ENCODE measurements at regions of chr4 and their contacts with region 1.

Region 1: DNA sequence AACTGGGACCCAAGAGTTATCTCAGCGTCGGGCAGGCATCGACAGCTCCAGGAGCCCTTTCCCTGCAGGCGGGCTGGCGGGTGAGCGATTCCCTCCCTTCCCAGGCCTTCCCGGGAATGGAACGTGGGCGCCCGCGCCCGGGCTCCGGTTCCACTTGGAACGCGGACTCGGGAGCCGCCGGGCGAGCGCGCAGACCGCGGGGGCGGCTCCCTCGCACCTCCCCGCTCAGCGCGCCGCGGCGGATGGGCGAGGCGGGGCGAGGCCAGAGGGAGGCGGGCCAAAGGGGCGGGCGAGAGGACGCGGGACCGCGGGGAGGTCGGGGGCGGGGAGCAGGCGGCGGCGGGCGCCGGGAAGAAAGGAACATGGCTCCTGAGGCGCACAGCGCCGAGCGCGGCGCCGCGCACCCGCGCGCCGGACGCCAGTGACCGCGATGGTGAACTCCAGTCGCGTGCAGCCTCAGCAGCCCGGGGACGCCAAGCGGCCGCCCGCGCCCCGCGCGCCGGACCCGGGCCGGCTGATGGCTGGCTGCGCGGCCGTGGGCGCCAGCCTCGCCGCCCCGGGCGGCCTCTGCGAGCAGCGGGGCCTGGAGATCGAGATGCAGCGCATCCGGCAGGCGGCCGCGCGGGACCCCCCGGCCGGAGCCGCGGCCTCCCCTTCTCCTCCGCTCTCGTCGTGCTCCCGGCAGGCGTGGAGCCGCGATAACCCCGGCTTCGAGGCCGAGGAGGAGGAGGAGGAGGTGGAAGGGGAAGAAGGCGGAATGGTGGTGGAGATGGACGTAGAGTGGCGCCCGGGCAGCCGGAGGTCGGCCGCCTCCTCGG is at the start of gene PKD2:
- DNase-seq: peak in 1 of 2 donors; percentile 93
- H3K4me3 ChIP-seq: peak within 1 kb of the TSS; percentile 90 to 96
- H3K27ac ChIP-seq: peak within 1 kb of the TSS; percentile 94 to 98
- H3K4me1 ChIP-seq: peaks cover 0 to 35% of the 10 kb centered on the region in 2 donors
- H3K27me3 ChIP-seq: no peaks in the 10 kb centered on the region
- CTCF ChIP-seq: peak in 1 of 3 experiments; percentile 24
- total RNA-seq, gene PKD2: 119 TPM

Region 2: DNA sequence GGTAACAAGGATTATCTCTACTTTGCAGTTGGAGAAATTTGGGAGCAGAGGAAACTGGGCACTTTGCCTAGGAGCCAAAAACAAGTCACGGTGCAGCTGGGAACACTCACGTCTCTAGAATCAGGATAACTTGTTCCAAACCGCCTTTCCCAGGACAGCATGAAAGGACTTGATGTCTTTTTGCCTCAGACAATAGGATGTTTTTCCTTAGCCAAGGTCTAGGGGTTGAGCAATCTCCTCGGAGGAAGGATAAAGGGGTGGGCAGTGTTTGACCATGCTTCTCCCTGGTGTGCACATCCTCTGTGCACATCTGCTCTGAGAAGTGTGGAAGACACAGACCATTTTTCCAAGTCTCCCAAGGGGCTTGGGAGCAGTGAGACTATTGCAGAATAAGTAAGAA is 476.6 kb before region 1 on chr4:
- intact Hi-C with region 1: loop called (anchors 1 kb)
- DNase-seq: peak in 1 of 2 donors; percentile 89
- H3K4me3 ChIP-seq: peak overlapping the region; percentile 46 to 71
- H3K27ac ChIP-seq: peak overlapping the region; percentile 91 to 95
- H3K4me1 ChIP-seq: peaks cover 8 to 20% of the 10 kb centered on the region in 2 donors
- H3K27me3 ChIP-seq: no peaks in the 10 kb centered on the region
- CTCF ChIP-seq: no peak

Region 3: GRCh38 chr4:88017516-88018297 is 10.2 kb after region 1 on chr4:
- intact Hi-C with region 1: loop called (anchors 1 kb)
- DNase-seq: peak in 1 of 2 donors; percentile 76
- H3K4me3 ChIP-seq: peak overlapping the region in 1 of 2 donors; percentile 45
- H3K27ac ChIP-seq: peak overlapping the region; percentile 94 to 98
- H3K4me1 ChIP-seq: peaks cover 4 to 63% of the 10 kb centered on the region in 2 donors
- H3K27me3 ChIP-seq: no peaks in the 10 kb centered on the region
- CTCF ChIP-seq: no peak

Region 4: GRCh38 chr4:88523325-88524129 is 516.0 kb after region 1 on chr4 and contains the start of gene PYURF:
- intact Hi-C with region 1: loop called (anchors 1 kb)
- DNase-seq: peak; percentile 88 to 99
- H3K4me3 ChIP-seq: peak within 1 kb of the TSS; percentile 87 to 95
- H3K27ac ChIP-seq: peak within 1 kb of the TSS; percentile 87 to 94
- H3K4me1 ChIP-seq: peaks cover 0 to 16% of the 10 kb centered on the region in 2 donors
- H3K27me3 ChIP-seq: no peaks in the 10 kb centered on the region
- CTCF ChIP-seq: peak in 1 of 3 experiments; percentile 5
- total RNA-seq, gene PYURF: 91.6 TPM